Left cardiac atrium (tissue), 4 donors: ENCODE measurements at regions of chr10 and their contacts with region 1.

Region 1: GRCh38 chr10:104327745-104328645 is 10.3 kb downstream of the ITPRIP start:
- DNase-seq: peak; percentile 71
- ATAC-seq: peak; percentile 5 to 9

Region 2: GRCh38 chr10:104155591-104155990 is 172.4 kb before region 1 on chr10:
- intact Hi-C with region 1: no loop called
- DNase-seq: no peak
- ATAC-seq: no peak

Region 3: DNA sequence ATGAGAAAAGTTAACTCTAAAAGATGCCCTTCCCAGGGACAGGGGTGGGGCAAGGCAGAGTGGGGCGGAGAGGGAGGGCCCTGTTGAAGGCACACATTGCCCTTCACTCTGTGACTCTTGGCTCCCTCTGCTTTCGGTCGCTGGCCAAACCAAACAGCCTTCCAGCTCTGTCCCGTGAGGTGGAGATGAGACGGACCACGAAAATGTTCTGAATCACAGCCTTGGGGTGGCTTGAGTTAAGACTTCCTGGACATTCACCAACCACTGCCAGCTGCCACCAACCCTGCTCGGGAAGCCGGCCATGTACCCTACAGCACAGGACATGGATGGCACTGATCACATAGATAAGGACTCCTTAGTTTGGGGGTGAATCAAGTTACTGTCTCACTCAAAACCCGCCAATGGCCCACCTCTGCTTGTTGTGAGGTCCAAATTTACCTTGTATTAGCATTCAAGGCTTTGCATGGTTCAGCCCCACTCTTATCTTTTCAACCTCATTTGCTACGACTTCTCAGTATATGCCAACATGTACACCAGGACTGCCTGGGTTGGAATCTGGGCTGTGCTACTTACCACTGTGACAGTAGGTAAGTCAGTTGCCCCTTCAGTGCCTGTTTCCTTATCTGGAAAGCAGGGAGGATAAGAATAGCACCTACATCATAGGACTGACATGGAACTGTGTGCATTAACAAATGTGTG is 17.9 kb before region 1 on chr10:
- intact Hi-C with region 1: loop called in 1 of 2 experiments (anchors 2 kb)
- DNase-seq: peak; percentile 86
- ATAC-seq: peak; percentile 81 to 87

Region 4: DNA sequence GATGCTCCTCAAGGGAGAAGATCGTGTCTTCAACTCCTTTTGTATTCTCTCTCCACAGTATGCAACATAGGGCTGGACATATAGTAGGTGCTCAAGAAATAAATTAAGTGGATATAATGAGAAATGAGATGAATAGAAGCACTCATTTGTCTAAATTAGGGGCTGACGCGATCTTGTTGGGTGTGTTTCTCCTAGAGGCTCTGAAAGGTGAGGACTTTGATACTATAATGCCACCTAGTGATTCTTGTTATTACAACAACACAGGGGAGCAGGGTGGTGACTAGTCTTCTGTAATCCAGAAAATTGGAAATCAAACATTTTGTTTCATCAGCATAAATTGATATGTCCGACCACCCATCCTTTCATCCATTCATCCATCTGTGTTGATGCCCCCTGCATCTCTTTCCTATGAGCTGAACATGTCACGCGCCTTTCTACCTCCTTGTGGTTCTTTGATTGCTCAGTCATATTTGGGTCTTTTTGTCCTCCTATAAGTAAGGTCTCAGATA is 22.2 kb after region 1 on chr10:
- intact Hi-C with region 1: no loop called
- DNase-seq: no peak
- ATAC-seq: peak; percentile 67 to 75

Region 5: DNA sequence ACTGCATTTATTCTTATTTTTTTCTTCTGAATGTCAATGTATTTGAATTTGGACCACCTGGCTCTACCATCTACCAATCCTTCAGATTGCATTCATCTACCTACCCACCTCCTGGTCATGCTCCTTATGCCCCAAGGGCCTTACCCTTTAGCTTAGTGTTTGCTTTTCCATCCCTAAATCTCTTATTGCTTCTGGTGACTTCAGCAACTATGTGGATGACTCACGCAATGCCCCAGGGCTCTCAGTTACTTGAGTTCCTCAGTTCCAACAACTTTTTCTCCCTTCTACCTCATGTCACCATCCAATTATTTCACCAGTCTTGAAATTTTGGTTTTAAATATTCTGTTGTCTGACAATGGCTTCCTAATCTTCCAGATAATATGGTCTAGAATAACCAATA is 144.5 kb after region 1 on chr10:
- intact Hi-C with region 1: no loop called
- DNase-seq: no peak
- ATAC-seq: no peak